B cell (primary cell): ENCODE measurements at regions of chr17 and their contacts with region 1.

Region 1: DNA sequence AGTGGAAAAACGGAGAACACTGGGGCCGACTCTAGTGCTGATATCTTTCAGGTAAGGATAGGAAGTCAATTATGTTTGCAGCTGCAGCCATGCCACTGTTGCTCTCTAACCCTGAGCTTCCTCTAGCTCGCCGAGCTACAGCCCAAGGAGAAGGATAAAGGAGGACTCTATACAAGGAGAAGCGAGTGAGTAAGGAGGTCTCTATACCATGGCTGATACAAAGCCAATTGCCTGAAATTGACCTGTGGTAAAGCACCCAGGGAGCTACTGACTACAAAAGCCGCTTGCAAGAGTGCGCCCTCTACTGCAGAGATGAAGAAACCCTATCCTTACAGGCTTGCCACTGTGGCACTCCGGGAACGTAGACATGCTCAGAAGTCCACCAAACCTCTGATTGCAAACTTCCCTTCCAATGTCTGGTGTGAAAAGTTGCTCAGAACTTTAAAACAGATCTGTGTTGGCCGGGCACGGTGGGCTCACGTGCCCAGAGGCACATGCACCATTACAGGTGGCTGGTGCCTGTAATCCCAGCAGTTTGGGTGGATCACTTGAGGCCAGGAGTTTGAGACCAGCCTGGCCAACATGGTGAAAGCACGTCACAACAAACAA is 10.8 kb upstream of the SLC46A1 start:
- DNase-seq: peak; percentile 67
- ATAC-seq: peak; percentile 92
- H3K4me3 ChIP-seq: no peak overlapping the region
- H3K4me3 Mint-ChIP-seq: no peak overlapping the region
- H3K27ac ChIP-seq: no peak overlapping the region
- H3K27ac Mint-ChIP-seq: no peak overlapping the region
- H3K4me1 ChIP-seq: peaks cover 4% of the 10 kb centered on the region in 2 donors
- H3K4me1 Mint-ChIP-seq: peaks cover 5% of the 10 kb centered on the region
- H3K27me3 ChIP-seq: peaks cover 0 to 3% (median 0%) of the 10 kb centered on the region in 4 experiments
- H3K27me3 Mint-ChIP-seq: peaks cover 15% of the 10 kb centered on the region
- CTCF ChIP-seq: peak; percentile 91

Region 2: DNA sequence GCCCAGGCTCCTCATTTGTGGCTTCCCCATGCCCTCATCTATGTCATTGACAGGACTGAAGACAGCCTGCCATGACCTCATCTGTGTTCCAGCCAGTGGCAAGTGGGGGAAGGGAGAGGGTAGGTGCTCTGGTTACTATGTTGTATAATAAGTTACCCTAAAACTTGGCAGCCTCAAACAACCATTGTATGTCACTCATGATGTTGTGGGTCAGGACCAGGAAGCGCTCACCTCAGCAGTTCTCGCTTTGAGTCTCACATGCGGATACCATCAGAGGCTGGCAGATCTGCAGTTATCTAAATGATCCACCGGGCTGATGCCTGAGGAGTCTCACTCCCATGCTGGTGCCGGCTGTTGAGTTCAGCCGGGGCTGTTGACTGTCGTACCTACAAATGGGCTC is 186.8 kb before region 1 on chr17:
- CTCF ChIA-PET with region 1: interaction called, 36 read pairs
- POLR2A ChIA-PET with region 1: no interaction called
- intact Hi-C with region 1: no loop called
- DNase-seq: no peak
- ATAC-seq: no peak
- H3K4me3 ChIP-seq: no peak overlapping the region
- H3K4me3 Mint-ChIP-seq: no peak overlapping the region
- H3K27ac ChIP-seq: no peak overlapping the region
- H3K27ac Mint-ChIP-seq: no peak overlapping the region
- H3K4me1 ChIP-seq: peaks cover 12 to 16% of the 10 kb centered on the region in 2 donors
- H3K4me1 Mint-ChIP-seq: peaks cover 11% of the 10 kb centered on the region
- H3K27me3 ChIP-seq: peaks cover 0 to 50% (median 16%) of the 10 kb centered on the region in 4 experiments
- H3K27me3 Mint-ChIP-seq: peaks cover 63% of the 10 kb centered on the region
- CTCF ChIP-seq: no peak

Region 3: GRCh38 chr17:28405632-28406472 is 11.0 kb before region 1 on chr17 and contains the start of gene SLC46A1:
- CTCF ChIA-PET with region 1: interaction called, 20 read pairs
- POLR2A ChIA-PET with region 1: no interaction called
- intact Hi-C with region 1: no loop called
- DNase-seq: peak; percentile 59
- ATAC-seq: peak; percentile 91
- H3K4me3 ChIP-seq: peak within 1 kb of the TSS in 4 of 5 experiments; percentile 58 to 91 (median 75)
- H3K4me3 Mint-ChIP-seq: peak within 1 kb of the TSS; percentile 90
- H3K27ac ChIP-seq: peak within 1 kb of the TSS in 1 of 2 donors; percentile 5
- H3K27ac Mint-ChIP-seq: peak within 1 kb of the TSS; percentile 81
- H3K4me1 ChIP-seq: peaks cover 8 to 12% of the 10 kb centered on the region in 2 donors
- H3K4me1 Mint-ChIP-seq: peaks cover 10% of the 10 kb centered on the region
- H3K27me3 ChIP-seq: no peaks in the 10 kb centered on the region
- H3K27me3 Mint-ChIP-seq: peaks cover 7% of the 10 kb centered on the region
- CTCF ChIP-seq: no peak
- total RNA-seq, gene SLC46A1: 4.3 and 5.0 TPM in 2 replicates